Activated CD4-positive, alpha-beta T cell treated with anti-CD3 and anti-CD28 coated beads, Interleukin-2, amount 10 ng/mL, durations not matched to agents 24 days and 14 days (primary cell): ENCODE measurements at regions of chr4 and their contacts with region 1.

Region 1: GRCh38 chr4:176340871-176341685 is 21.3 kb downstream of the SPCS3 start:
- DNase-seq: no peak
- H3K4me3 Mint-ChIP-seq: no peak overlapping the region
- H3K27ac Mint-ChIP-seq: no peak overlapping the region
- H3K4me1 Mint-ChIP-seq: no peaks in the 10 kb centered on the region
- H3K27me3 Mint-ChIP-seq: no peaks in the 10 kb centered on the region

Region 2: DNA sequence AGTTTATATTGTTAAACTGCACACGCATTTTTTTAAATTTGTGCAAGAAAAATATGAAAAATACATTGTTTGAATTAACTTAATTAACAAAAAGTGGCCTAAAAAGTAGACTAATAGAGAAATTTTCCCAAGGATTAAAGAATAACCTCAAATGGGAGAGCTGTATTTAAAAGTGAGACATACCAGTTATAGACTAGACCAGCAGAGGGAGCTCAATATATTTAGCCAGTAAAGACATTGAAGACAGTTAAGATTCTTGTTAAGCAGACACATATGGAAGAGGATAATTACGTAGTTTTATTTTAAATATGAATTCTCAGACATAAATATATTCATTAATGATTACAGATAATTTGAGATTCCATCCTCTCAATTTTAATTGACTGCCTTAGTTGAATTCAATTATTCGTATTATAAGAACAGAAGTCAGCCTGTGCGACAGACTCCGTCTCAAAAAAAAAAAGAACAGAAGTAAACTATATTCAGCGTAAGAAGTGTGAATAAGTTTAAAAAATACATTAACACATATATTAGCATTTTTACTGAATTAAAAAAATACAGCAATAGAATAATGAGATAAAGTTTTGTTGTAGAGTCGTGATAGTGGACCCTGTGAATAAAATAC is 1576.9 kb before region 1 on chr4:
- intact Hi-C with region 1: loop called (anchors 10 kb)
- DNase-seq: no peak
- H3K4me3 Mint-ChIP-seq: no peak overlapping the region
- H3K27ac Mint-ChIP-seq: no peak overlapping the region
- H3K4me1 Mint-ChIP-seq: no peaks in the 10 kb centered on the region
- H3K27me3 Mint-ChIP-seq: no peaks in the 10 kb centered on the region

Region 3: GRCh38 chr4:175947117-175947722 is 393.9 kb before region 1 on chr4:
- intact Hi-C with region 1: loop called (anchors 1 kb)
- DNase-seq: no peak
- H3K4me3 Mint-ChIP-seq: no peak overlapping the region
- H3K27ac Mint-ChIP-seq: no peak overlapping the region
- H3K4me1 Mint-ChIP-seq: peaks cover 4% of the 10 kb centered on the region
- H3K27me3 Mint-ChIP-seq: peaks cover 11% of the 10 kb centered on the region

Region 4: GRCh38 chr4:176034499-176034898 is 306.6 kb before region 1 on chr4:
- intact Hi-C with region 1: loop called (anchors 5 kb)
- DNase-seq: peak; percentile 58
- H3K4me3 Mint-ChIP-seq: no peak overlapping the region
- H3K27ac Mint-ChIP-seq: no peak overlapping the region
- H3K4me1 Mint-ChIP-seq: no peaks in the 10 kb centered on the region
- H3K27me3 Mint-ChIP-seq: no peaks in the 10 kb centered on the region

Region 5: GRCh38 chr4:176150356-176150682 is 190.8 kb before region 1 on chr4:
- intact Hi-C with region 1: loop called (anchors 1 kb)
- DNase-seq: no peak
- H3K4me3 Mint-ChIP-seq: no peak overlapping the region
- H3K27ac Mint-ChIP-seq: no peak overlapping the region
- H3K4me1 Mint-ChIP-seq: no peaks in the 10 kb centered on the region
- H3K27me3 Mint-ChIP-seq: no peaks in the 10 kb centered on the region

Region 6: GRCh38 chr4:176286728-176287127 is 54.4 kb before region 1 on chr4:
- intact Hi-C with region 1: no loop called
- DNase-seq: no peak
- H3K4me3 Mint-ChIP-seq: no peak overlapping the region
- H3K27ac Mint-ChIP-seq: no peak overlapping the region
- H3K4me1 Mint-ChIP-seq: no peaks in the 10 kb centered on the region
- H3K27me3 Mint-ChIP-seq: no peaks in the 10 kb centered on the region

Region 7: DNA sequence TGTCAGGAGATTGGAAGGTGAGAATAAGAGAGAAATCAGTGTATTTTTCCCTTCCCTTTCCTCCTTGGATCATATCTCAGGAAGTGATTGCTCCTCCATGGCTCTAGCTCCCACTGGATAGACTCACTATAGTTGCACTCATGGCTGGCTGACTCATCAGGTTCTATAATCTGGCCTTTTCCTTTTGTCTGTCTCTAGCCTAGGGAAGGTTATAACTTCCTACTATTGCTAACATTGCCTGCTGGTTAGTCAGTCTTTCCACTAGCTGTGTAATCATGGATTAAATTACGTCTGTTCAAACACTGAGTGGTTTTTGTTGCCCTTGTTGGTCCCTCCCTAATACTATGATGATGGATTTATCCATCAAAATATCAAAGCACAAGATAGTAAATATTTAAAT is 647.1 kb after region 1 on chr4:
- intact Hi-C with region 1: no loop called
- DNase-seq: no peak
- H3K4me3 Mint-ChIP-seq: no peak overlapping the region
- H3K27ac Mint-ChIP-seq: no peak overlapping the region
- H3K4me1 Mint-ChIP-seq: no peaks in the 10 kb centered on the region
- H3K27me3 Mint-ChIP-seq: peaks cover 2% of the 10 kb centered on the region